Mammary epithelial cell (primary cell): ENCODE measurements at regions of chr4 and their contacts with region 1.

Region 1: DNA sequence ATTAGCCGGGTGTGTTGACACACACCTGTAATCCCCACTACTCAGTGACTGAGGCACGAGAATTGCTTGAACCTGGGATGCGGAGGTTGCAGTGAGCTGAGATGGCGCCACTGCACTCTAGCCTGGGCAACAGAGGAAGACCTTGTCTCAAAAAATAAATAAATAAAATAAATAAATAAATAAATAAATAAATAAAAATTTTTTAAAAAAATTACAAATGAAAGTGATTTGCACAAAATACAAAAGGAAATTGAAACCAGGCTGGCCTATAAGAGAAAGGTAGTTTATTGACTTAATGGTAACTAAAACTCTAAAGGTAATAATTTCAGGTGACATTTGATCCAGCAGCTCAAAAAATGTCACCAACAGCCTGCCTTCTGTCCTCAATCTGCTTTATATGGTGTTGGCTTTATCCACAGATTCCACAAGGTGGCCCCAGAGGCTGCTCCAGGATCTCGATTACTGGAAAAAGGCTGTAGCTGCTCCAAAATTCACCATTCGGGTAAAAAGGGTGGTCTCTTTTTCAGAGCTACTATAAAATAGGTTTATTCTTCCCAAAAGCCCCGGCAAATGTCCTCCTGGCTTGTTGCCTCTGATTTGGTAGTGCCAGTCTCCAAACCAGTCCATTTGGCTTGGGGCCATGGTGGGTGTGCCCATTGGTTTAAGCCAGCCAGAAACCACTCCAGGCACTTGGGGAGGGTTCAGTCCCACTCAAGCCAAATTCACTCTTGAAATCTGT is 61.4 kb upstream of the TRIM2 start:
- DNase-seq: peak; percentile 50
- H3K4me3 ChIP-seq: no peak overlapping the region
- H3K27ac ChIP-seq: no peak overlapping the region
- H3K4me1 ChIP-seq: peaks cover 22% of the 10 kb centered on the region
- H3K27me3 ChIP-seq: no peaks in the 10 kb centered on the region
- CTCF ChIP-seq: peak; percentile 84 to 94

Region 2: DNA sequence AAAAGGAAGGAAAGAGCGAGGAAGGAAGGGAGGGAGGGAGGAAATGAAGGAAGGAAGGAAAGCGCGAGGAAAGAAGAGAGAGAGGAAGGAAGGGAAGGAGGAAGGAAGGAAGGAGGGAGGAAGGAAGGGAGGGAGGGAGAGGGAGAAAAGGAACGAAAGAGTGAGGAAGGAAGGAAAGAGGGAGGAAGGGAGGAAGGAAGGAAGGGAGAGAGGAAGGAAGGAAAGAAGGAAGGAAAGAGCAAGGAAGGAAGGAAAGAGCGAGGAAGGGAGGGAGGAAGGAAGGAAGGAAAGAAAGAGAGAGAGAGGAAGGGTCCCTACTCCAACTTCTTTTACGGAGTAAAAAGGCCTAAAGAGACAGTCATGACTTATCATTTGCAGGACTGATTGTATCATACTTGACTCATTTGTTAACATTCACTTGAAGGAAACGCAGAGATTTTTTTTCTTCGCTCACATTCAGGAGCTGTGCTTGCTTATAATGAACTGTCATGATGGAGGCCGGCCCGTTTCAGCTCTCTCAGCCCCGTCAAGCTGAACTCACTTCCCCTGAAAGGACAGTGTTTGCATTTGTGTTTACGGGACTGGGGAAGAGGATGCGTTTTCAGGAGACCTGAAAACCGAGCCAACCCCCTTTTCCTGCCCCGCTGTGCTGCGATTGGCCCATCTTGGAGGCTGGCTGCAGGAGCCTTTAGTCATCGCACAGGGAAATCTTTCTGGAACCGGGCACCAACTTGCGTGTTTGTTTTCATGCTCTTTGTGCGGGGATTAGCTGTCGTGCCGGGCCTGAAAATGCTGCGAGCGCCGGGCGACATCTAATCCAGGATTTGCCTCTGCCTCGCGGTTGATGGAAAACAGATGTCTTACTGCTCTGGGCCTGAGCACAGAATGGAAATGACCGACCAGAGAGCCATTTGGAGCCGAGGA is 79.2 kb after region 1 on chr4:
- CTCF ChIA-PET with region 1: no interaction called
- dilution Hi-C with region 1: no loop called
- in situ Hi-C with region 1: no loop called
- intact Hi-C with region 1: loop called (anchors 2 kb)
- DNase-seq: peak; percentile 73
- H3K4me3 ChIP-seq: peak overlapping the region; percentile 58 to 73 (median 61)
- H3K27ac ChIP-seq: peak overlapping the region; percentile 66
- H3K4me1 ChIP-seq: peaks cover 12% of the 10 kb centered on the region
- H3K27me3 ChIP-seq: no peaks in the 10 kb centered on the region
- CTCF ChIP-seq: no peak

Region 3: DNA sequence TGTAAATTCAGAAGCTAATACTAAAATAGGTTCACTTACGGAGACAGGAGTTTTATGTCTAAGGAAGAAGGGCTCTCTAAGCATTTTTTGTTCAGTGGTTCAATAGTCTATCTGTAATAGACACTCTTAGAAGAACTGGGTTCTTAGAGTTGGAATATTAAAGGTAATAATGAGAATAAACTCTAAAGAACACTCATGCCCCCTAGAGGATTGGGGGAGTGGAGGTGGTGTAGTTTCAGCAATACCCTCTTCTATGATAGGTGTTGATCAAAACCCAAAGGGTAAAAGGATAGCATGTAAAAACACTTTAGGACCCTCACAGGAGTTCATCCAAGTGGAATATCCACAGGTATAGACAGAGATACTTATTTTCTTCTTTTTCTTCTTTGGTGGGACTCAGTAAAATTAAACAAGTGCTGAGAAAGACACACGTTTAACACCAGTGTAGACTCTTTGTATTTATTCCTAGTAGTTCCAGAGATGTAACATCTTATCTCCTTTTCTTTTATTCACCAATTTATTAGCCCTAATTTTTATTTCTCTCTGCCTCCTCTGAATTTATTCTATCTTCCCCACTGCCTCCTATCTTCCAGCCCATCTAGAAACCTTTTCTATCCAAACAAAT is 175.9 kb after region 1 on chr4:
- CTCF ChIA-PET with region 1: interaction called, 4 read pairs
- dilution Hi-C with region 1: loop called (anchors 25 kb)
- in situ Hi-C with region 1: loop called (anchors 5 kb)
- intact Hi-C with region 1: loop called (anchors 1 kb)
- DNase-seq: peak; percentile 38
- H3K4me3 ChIP-seq: no peak overlapping the region
- H3K27ac ChIP-seq: no peak overlapping the region
- H3K4me1 ChIP-seq: no peaks in the 10 kb centered on the region
- H3K27me3 ChIP-seq: no peaks in the 10 kb centered on the region
- CTCF ChIP-seq: peak; percentile 73 to 82

Region 4: GRCh38 chr4:153432968-153433753 is 290.3 kb after region 1 on chr4:
- CTCF ChIA-PET with region 1: interaction called, 3 read pairs
- dilution Hi-C with region 1: no loop called
- in situ Hi-C with region 1: no loop called
- intact Hi-C with region 1: loop called (anchors 1 kb)
- DNase-seq: peak; percentile 94
- H3K4me3 ChIP-seq: no peak overlapping the region
- H3K27ac ChIP-seq: peak overlapping the region; percentile 52
- H3K4me1 ChIP-seq: peaks cover 11% of the 10 kb centered on the region
- H3K27me3 ChIP-seq: no peaks in the 10 kb centered on the region
- CTCF ChIP-seq: peak; percentile 75 to 84

Region 5: GRCh38 chr4:153643406-153644383 is 500.8 kb after region 1 on chr4:
- CTCF ChIA-PET with region 1: no interaction called
- dilution Hi-C with region 1: no loop called
- in situ Hi-C with region 1: no loop called
- intact Hi-C with region 1: loop called (anchors 1 kb)
- DNase-seq: peak; percentile 54
- H3K4me3 ChIP-seq: no peak overlapping the region
- H3K27ac ChIP-seq: no peak overlapping the region
- H3K4me1 ChIP-seq: peaks cover 4% of the 10 kb centered on the region
- H3K27me3 ChIP-seq: no peaks in the 10 kb centered on the region
- CTCF ChIP-seq: peak; percentile 48 to 56